ENCODE measurements at regions of chr10 and their contacts with region 1.

Region 1: GRCh38 chr10:79195091-79195923 is 126.5 kb downstream of the ZMIZ1 start:
- DNase-seq: peak; percentile 66 to 72 (median 71)
- H3K4me3 ChIP-seq: no peak overlapping the region
- H3K4me3 Mint-ChIP-seq: peak overlapping the region in 2 of 8 donors; percentile 21 to 32
- H3K27ac ChIP-seq: no peak overlapping the region
- H3K27ac Mint-ChIP-seq: peak overlapping the region in 4 of 7 donors; percentile 18 to 44 (median 34)
- H3K4me1 ChIP-seq: peaks cover 3% of the 10 kb centered on the region
- H3K4me1 Mint-ChIP-seq: peaks cover 0 to 6% (median 2%) of the 10 kb centered on the region in 4 donors
- H3K27me3 ChIP-seq: no peaks in the 10 kb centered on the region
- H3K27me3 Mint-ChIP-seq: no peaks in the 10 kb centered on the region

Region 2: DNA sequence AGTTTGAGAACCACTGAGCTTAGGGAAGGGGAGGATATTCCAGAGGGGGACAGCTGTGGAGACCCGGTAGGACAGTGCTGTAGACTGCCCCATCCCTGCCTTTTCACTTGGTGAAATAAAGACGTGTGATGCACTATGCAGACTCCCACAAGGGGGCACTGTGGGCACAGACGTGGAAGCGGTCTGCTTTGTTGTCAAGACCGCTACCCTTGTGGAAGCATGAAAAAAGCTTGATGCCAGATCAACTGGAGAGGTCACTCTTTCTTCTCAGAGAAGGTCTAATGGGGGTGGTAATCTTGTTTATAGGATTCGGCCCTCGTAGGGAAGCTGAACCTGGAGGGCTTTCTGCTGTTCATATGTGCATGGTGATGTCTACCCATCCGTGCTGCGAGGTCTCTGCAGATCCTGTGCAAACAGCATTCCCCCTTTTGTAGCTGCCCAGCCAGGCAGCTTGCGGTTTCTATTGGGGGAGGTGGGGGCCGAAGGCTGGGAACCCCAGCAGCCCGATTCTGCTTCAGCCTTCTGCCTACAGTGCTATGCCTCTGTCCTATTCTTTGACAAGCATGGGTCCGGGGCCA is 1147.9 kb before region 1 on chr10:
- CTCF ChIA-PET with region 1: interaction called, 116 read pairs
- POLR2A ChIA-PET with region 1: interaction called, 6 read pairs
- intact Hi-C with region 1: loop called (anchors 1 kb)
- DNase-seq: peak; percentile 64 to 76 (median 73)
- H3K4me3 ChIP-seq: no peak overlapping the region
- H3K4me3 Mint-ChIP-seq: no peak overlapping the region
- H3K27ac ChIP-seq: no peak overlapping the region
- H3K27ac Mint-ChIP-seq: peak overlapping the region in 1 of 7 donors; percentile 62
- H3K4me1 ChIP-seq: peaks cover 7% of the 10 kb centered on the region
- H3K4me1 Mint-ChIP-seq: peaks cover 3 to 15% (median 11%) of the 10 kb centered on the region in 4 donors
- H3K27me3 ChIP-seq: no peaks in the 10 kb centered on the region
- H3K27me3 Mint-ChIP-seq: no peaks in the 10 kb centered on the region

Region 3: GRCh38 chr10:78302989-78303854 is 892.1 kb before region 1 on chr10:
- CTCF ChIA-PET with region 1: interaction called, 4 read pairs
- POLR2A ChIA-PET with region 1: no interaction called
- intact Hi-C with region 1: loop called (anchors 5 kb)
- DNase-seq: peak; percentile 93 to 96 (median 95)
- H3K4me3 ChIP-seq: peak overlapping the region; percentile 67 to 70
- H3K4me3 Mint-ChIP-seq: peak overlapping the region; percentile 92 to 97 (median 94)
- H3K27ac ChIP-seq: peak overlapping the region; percentile 91
- H3K27ac Mint-ChIP-seq: peak overlapping the region; percentile 95 to 99 (median 98)
- H3K4me1 ChIP-seq: peaks cover 17% of the 10 kb centered on the region
- H3K4me1 Mint-ChIP-seq: peaks cover 7 to 24% (median 14%) of the 10 kb centered on the region in 4 donors
- H3K27me3 ChIP-seq: no peaks in the 10 kb centered on the region
- H3K27me3 Mint-ChIP-seq: peaks cover 0 to 2% of the 10 kb centered on the region in 2 donors

Region 4: GRCh38 chr10:78664929-78665553 is 530.3 kb before region 1 on chr10:
- CTCF ChIA-PET with region 1: interaction called, 20 read pairs
- POLR2A ChIA-PET with region 1: no interaction called
- intact Hi-C with region 1: no loop called
- DNase-seq: no peak
- H3K4me3 ChIP-seq: no peak overlapping the region
- H3K4me3 Mint-ChIP-seq: no peak overlapping the region
- H3K27ac ChIP-seq: no peak overlapping the region
- H3K27ac Mint-ChIP-seq: no peak overlapping the region
- H3K4me1 ChIP-seq: no peaks in the 10 kb centered on the region
- H3K4me1 Mint-ChIP-seq: no peaks in the 10 kb centered on the region
- H3K27me3 ChIP-seq: no peaks in the 10 kb centered on the region
- H3K27me3 Mint-ChIP-seq: peaks cover 18 to 32% of the 10 kb centered on the region in 2 donors

Region 5: GRCh38 chr10:78937800-78938694 is 257.3 kb before region 1 on chr10:
- CTCF ChIA-PET with region 1: interaction called, 58 read pairs
- POLR2A ChIA-PET with region 1: no interaction called
- intact Hi-C with region 1: loop called (anchors 1 kb)
- DNase-seq: peak in 3 of 5 donors; percentile 4 to 17 (median 7)
- H3K4me3 ChIP-seq: no peak overlapping the region
- H3K4me3 Mint-ChIP-seq: no peak overlapping the region
- H3K27ac ChIP-seq: no peak overlapping the region
- H3K27ac Mint-ChIP-seq: peak overlapping the region in 1 of 7 donors; percentile 37
- H3K4me1 ChIP-seq: no peaks in the 10 kb centered on the region
- H3K4me1 Mint-ChIP-seq: no peaks in the 10 kb centered on the region
- H3K27me3 ChIP-seq: no peaks in the 10 kb centered on the region
- H3K27me3 Mint-ChIP-seq: no peaks in the 10 kb centered on the region

Region 6: GRCh38 chr10:79074732-79075131 is 120.6 kb before region 1 on chr10:
- CTCF ChIA-PET with region 1: interaction called, 11 read pairs
- POLR2A ChIA-PET with region 1: interaction called, 3 read pairs
- intact Hi-C with region 1: loop called (anchors 2 kb)
- DNase-seq: no peak
- H3K4me3 ChIP-seq: no peak overlapping the region
- H3K4me3 Mint-ChIP-seq: no peak overlapping the region
- H3K27ac ChIP-seq: no peak overlapping the region
- H3K27ac Mint-ChIP-seq: peak overlapping the region in 1 of 7 donors; percentile 64
- H3K4me1 ChIP-seq: peaks cover 60% of the 10 kb centered on the region
- H3K4me1 Mint-ChIP-seq: peaks cover 16 to 74% (median 47%) of the 10 kb centered on the region in 4 donors
- H3K27me3 ChIP-seq: no peaks in the 10 kb centered on the region
- H3K27me3 Mint-ChIP-seq: no peaks in the 10 kb centered on the region

Region 7: DNA sequence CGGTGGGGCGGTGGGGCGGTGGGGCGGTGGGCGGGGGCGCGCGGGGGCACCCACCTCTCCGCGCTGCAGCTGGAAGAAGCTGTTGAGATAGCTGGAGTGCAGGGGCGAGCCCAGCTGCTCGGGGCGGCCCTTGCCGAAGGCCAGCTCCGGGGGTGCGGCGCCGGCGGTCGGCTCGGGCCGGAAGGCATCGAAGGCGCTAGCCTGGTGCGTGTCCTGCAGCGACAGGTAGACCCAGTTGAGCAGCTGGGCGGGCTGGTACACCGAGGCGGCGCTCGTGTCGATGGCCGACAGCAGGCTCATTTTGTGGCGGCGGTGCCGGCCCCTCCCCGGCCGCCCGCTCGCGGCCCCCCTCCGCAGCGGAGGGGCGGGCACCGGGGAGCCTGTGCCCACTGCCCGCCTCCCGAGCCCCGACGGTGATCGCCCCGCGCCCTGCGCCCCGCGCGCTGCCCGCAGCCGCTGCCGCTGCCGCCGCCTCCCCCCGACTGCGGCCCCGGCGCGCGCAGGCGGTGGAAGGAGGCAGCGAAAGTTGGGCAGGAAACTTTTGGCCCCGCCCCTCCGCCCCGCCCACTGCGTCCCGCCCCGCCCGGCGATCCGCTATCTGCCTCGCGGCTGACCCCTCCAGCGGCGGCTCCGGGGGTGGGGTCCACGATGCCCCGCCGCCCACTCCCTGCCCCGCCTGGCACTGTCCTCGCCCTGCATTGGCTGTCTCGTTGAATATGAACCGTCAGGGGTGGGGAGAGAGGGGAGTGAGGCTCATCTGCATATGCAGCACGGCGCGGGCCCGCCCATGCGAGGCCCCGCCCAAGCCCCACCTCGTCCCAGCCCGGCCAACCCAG is 250.1 kb after region 1 on chr10 and contains the start of gene ZCCHC24:
- CTCF ChIA-PET with region 1: no interaction called
- POLR2A ChIA-PET with region 1: no interaction called
- intact Hi-C with region 1: no loop called
- DNase-seq: peak; percentile 95 to 97 (median 97)
- H3K4me3 ChIP-seq: peak within 1 kb of the TSS; percentile 63 to 64
- H3K4me3 Mint-ChIP-seq: peak within 1 kb of the TSS; percentile 87 to 98 (median 90)
- H3K27ac ChIP-seq: peak within 1 kb of the TSS; percentile 57
- H3K27ac Mint-ChIP-seq: peak within 1 kb of the TSS; percentile 85 to 98 (median 91)
- H3K4me1 ChIP-seq: peaks cover 21% of the 10 kb centered on the region
- H3K4me1 Mint-ChIP-seq: peaks cover 17 to 34% (median 23%) of the 10 kb centered on the region in 4 donors
- H3K27me3 ChIP-seq: no peaks in the 10 kb centered on the region
- H3K27me3 Mint-ChIP-seq: no peaks in the 10 kb centered on the region
- total RNA-seq, gene ZCCHC24: 1.7 to 1.9 TPM

Measured in CD4-positive, alpha-beta memory T cell (primary cell).